ENCODE measurements at regions of chr3 and their contacts with region 1.

Region 1: GRCh38 chr3:182683453-182683852 is 109.9 kb upstream of the ATP11B start:
- DNase-seq: peak; percentile 72
- H3K4me3 ChIP-seq: no peak overlapping the region
- H3K27ac ChIP-seq: no peak overlapping the region
- H3K4me1 ChIP-seq: peaks cover 18% of the 10 kb centered on the region
- H3K27me3 ChIP-seq: no peaks in the 10 kb centered on the region
- CTCF ChIP-seq: peak; percentile 92 to 94

Region 2: GRCh38 chr3:181700168-181701087 is 983.0 kb before region 1 on chr3:
- CTCF ChIA-PET with region 1: no interaction called
- dilution Hi-C with region 1: no loop called
- in situ Hi-C with region 1: loop called (anchors 10 kb)
- intact Hi-C with region 1: no loop called
- DNase-seq: peak; percentile 66
- H3K4me3 ChIP-seq: peak overlapping the region in 2 of 3 experiments; percentile 10 to 34
- H3K27ac ChIP-seq: no peak overlapping the region
- H3K4me1 ChIP-seq: peaks cover 28% of the 10 kb centered on the region
- H3K27me3 ChIP-seq: peaks cover 25% of the 10 kb centered on the region
- CTCF ChIP-seq: peak; percentile 87 to 88

Region 3: DNA sequence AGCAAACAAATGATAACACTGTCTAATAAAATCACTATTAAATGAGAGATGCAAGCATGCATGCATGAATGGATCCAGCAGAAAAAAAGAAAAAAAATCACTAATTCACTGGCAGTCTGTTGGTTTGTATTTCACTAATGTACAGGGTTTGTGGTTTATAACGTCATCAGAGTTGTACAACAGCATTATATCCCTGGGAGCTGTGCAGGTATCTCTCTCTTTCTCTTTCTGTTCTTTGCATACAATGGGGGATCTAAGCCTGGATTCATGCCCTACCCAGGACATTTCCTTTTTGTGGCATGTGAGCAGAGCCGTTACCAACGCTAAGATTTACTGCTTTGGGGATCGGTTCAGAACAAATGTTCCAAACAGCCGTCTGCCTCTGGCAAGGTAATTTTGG is 742.2 kb before region 1 on chr3:
- CTCF ChIA-PET with region 1: no interaction called
- dilution Hi-C with region 1: no loop called
- in situ Hi-C with region 1: loop called in 1 of 2 experiments (anchors 10 kb)
- intact Hi-C with region 1: no loop called
- DNase-seq: peak; percentile 23
- H3K4me3 ChIP-seq: no peak overlapping the region
- H3K27ac ChIP-seq: no peak overlapping the region
- H3K4me1 ChIP-seq: no peaks in the 10 kb centered on the region
- H3K27me3 ChIP-seq: no peaks in the 10 kb centered on the region
- CTCF ChIP-seq: no peak

Region 4: DNA sequence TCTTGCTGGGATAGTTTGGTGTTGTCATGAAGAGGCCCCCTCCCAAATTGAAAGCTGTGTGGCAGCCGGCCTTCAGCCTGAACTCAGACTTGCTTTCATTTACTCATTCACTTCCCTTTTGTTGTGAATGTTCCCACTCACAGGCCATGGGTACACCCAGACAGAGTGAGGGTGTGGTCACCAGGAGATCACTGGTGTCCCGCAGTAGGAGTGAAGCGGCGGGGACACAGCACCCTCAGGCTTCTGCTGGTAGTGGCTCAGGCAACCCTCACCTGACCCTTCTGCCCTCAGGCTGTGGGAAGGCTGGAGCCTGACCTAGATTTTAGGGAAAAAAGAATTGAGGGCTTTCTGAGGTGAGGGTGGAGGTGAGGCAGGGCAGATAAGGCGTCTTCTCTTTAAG is 727.3 kb before region 1 on chr3:
- CTCF ChIA-PET with region 1: no interaction called
- dilution Hi-C with region 1: no loop called
- in situ Hi-C with region 1: loop called in 1 of 2 experiments (anchors 25 kb)
- intact Hi-C with region 1: no loop called
- DNase-seq: no peak
- H3K4me3 ChIP-seq: no peak overlapping the region
- H3K27ac ChIP-seq: no peak overlapping the region
- H3K4me1 ChIP-seq: no peaks in the 10 kb centered on the region
- H3K27me3 ChIP-seq: no peaks in the 10 kb centered on the region
- CTCF ChIP-seq: no peak

Region 5: DNA sequence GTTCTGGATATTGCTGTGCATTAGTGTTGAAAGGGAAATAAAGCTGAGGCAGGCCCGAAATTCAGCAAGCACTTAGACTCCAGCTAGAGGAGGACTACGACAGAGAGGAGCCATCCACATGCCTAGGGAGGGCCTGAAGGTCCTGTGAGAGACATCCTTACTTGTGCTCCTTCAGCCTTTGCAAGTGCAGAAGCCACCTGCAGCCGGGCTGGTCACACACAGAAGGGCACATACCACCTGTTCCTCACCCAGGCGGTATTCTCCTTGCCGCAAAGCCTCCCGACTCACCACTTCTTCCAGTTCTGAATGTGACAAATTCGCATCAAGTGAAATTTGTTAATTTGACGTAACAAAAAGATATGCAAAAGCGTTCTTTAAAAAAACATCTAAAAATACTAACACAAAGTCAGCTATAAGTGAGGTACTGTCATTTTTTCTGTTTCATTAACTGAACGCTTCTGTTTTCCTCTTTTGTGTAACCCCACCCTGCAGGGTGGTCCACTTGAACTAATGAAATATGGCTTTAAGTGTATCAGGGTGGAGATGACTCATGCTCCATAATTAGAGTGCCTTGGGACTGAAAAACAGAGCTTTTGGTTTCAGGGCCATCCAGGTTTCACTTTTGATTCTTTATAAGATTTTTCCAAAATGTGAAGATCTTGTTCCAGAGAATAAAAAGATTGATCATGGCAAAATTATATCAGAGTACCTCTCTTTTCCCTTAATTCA is 358.1 kb before region 1 on chr3:
- CTCF ChIA-PET with region 1: no interaction called
- dilution Hi-C with region 1: no loop called
- in situ Hi-C with region 1: no loop called
- intact Hi-C with region 1: no loop called
- DNase-seq: peak; percentile 17
- H3K4me3 ChIP-seq: no peak overlapping the region
- H3K27ac ChIP-seq: no peak overlapping the region
- H3K4me1 ChIP-seq: peaks cover 8% of the 10 kb centered on the region
- H3K27me3 ChIP-seq: no peaks in the 10 kb centered on the region
- CTCF ChIP-seq: no peak

Region 6: DNA sequence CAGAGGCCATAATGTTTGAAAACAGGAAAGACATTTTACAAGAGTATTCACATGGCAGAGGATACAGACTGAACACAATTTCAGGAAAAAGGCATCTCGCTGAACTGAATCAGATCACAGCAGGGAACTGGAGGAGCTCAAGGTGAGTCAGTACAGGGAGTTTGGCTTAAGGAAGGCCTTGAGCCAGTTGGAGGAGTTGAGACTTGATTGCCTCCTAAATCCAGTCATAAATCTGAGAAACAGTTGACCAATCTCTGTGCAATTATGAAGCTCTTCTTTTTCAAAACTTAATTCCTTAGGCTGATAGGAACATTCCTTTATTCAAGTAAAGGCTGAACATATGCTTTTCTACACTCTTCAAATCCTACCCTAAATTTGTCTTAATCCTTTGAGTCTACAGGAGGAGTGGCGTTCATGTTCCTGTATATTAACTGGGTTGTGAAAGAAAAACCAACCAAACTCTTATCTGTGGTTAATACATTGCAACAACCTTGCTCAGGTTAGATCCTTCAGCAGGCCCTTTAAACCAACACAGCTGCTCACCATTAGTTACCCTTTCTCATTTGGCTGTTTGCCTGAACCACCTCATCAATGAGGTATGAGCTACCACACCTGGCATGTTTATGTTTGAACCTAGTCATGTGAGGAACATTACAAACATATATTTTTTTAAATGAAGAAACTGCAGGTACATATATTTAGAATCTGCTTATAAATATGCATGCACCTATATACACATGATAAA is 294.2 kb before region 1 on chr3:
- CTCF ChIA-PET with region 1: interaction called, 3 read pairs
- dilution Hi-C with region 1: no loop called
- in situ Hi-C with region 1: no loop called
- intact Hi-C with region 1: loop called (anchors 2 kb)
- DNase-seq: peak; percentile 98
- H3K4me3 ChIP-seq: peak overlapping the region in 1 of 3 experiments; percentile 4
- H3K27ac ChIP-seq: peak overlapping the region; percentile 87
- H3K4me1 ChIP-seq: peaks cover 22% of the 10 kb centered on the region
- H3K27me3 ChIP-seq: no peaks in the 10 kb centered on the region
- CTCF ChIP-seq: no peak

Region 7: DNA sequence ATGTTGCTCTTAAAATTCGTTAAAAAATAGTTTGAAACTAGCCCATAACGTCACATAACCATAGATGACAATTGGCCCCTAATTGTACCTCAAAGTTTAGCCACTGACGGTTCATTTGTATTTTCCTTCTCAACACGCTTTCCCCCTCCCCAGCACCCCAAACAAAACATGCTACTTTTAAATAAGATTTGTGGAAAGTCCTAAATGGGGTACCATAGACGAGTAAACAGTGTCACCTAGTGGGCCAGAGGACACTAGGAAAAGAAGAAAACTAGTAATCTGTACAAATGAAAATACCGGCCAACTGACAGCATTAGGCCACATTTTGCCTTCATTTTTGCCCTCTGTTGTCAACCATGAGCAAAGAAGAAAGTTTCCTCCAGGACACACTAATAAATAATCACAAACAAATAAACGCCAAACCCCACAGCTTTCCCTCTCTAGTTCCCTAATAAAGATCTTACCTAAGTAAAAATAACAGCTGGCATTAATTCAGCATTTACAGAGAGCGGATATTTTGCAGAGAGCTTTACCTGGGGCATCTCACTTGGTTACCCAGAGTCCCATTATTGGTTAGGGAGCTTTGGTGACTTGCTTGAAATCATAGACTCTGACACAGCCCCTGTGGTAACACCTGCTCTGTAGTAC is 65.2 kb before region 1 on chr3:
- CTCF ChIA-PET with region 1: no interaction called
- dilution Hi-C with region 1: loop called (anchors 5 kb)
- in situ Hi-C with region 1: no loop called
- intact Hi-C with region 1: loop called (anchors 1 kb)
- DNase-seq: peak; percentile 57
- H3K4me3 ChIP-seq: no peak overlapping the region
- H3K27ac ChIP-seq: peak overlapping the region; percentile 81
- H3K4me1 ChIP-seq: peaks cover 18% of the 10 kb centered on the region
- H3K27me3 ChIP-seq: no peaks in the 10 kb centered on the region
- CTCF ChIP-seq: peak; percentile 70 to 74

Region 8: GRCh38 chr3:182810574-182811268 is 127.3 kb after region 1 on chr3:
- CTCF ChIA-PET with region 1: no interaction called
- dilution Hi-C with region 1: no loop called
- in situ Hi-C with region 1: no loop called
- intact Hi-C with region 1: no loop called
- DNase-seq: no peak
- H3K4me3 ChIP-seq: no peak overlapping the region
- H3K27ac ChIP-seq: no peak overlapping the region
- H3K4me1 ChIP-seq: no peaks in the 10 kb centered on the region
- H3K27me3 ChIP-seq: no peaks in the 10 kb centered on the region
- CTCF ChIP-seq: no peak

Region 9: DNA sequence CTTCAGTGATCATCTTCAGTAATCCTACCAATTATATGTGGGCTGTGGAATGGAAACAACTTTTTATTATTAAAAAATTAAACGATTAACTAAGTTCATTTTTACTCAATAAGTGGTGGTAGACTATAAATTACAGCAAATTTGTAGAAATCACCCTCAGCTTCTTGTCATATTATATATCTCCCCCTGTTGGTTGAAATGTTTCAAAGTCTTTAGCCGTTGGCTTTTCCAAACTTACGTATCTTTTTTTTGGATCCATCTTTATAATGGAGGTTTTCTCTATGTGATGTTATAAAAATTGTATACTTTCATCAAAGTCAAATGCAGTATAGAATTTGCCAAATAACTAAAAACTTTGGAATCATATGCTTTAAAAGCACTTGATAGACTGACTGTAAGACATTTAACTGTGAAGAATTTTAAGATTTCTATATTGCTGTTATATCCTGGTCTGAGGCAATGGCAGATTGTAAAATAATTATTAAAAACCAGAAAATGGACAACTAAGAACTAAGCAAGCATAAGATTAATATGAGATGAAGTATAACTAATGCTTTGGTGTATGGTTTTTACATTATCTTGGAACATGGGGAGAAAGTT is 154.5 kb after region 1 on chr3:
- CTCF ChIA-PET with region 1: no interaction called
- dilution Hi-C with region 1: no loop called
- in situ Hi-C with region 1: no loop called
- intact Hi-C with region 1: no loop called
- DNase-seq: peak; percentile 7
- H3K4me3 ChIP-seq: no peak overlapping the region
- H3K27ac ChIP-seq: no peak overlapping the region
- H3K4me1 ChIP-seq: no peaks in the 10 kb centered on the region
- H3K27me3 ChIP-seq: no peaks in the 10 kb centered on the region
- CTCF ChIP-seq: peak; percentile 29 to 46

Region 10: DNA sequence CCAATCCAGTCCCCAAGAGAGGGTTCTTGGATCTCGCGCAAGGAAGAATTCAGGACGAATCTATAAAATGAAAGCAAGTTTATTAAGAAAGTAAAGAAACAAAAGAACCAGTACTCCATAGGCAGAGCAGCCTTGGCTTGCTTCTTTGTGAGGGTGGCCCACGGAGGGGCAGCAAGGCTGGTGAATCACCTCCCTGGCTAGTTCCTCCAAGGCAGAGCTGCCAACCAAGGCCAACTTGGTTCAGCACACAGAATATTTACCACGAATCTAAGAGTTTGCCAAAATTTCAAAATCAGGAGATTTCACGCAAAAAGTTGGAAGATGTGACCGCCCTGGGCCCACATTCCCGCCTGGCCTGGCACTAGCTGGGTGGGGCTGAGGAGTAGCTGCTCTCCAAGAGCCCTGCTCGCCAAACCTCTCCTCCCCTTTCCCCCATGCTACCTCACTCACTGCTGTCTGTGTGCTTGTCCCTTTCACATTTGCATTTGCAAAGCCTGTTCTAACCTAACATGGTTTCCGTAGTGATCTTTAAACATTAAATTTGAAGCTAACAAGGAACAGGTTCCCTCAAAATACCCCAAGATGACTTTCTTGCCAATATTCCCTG is 323.0 kb after region 1 on chr3:
- CTCF ChIA-PET with region 1: no interaction called
- dilution Hi-C with region 1: no loop called
- in situ Hi-C with region 1: no loop called
- intact Hi-C with region 1: no loop called
- DNase-seq: no peak
- H3K4me3 ChIP-seq: no peak overlapping the region
- H3K27ac ChIP-seq: no peak overlapping the region
- H3K4me1 ChIP-seq: no peaks in the 10 kb centered on the region
- H3K27me3 ChIP-seq: no peaks in the 10 kb centered on the region
- CTCF ChIP-seq: no peak